ENCODE measurements at regions of chr1 and their contacts with region 1.

Region 1: DNA sequence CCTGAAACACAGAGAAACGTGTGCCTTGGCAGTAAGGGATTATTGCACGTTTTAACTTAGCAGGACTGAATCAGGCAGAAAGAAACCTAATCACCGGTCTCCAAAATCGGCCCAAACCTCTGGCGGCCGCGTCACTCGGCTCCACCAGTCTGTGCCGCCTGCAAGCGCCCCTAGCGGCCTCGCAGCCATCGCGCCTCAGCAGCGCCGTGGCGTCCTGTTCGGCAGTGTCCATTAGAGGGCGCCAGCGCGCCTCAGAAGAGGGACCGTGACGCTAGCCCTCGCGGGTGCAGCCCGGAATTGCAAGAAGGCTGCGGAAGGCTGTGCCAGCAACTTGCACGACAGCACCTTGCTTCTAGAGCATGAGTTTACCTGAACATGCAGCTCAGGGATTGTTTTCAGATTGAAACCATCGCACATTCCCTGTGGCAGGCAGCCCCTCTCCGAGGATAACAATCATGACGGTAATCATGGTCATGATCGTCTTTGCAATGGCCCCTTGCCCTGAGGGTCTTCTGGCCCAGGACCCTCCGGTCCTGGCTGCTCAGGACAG is 164.4 kb downstream of the TRIM33 start:
- DNase-seq: peak; percentile 98
- ATAC-seq: peak; percentile 98
- H3K4me3 Mint-ChIP-seq: peak overlapping the region; percentile 71
- H3K27ac Mint-ChIP-seq: peak overlapping the region; percentile 95
- H3K4me1 Mint-ChIP-seq: peaks cover 26% of the 10 kb centered on the region
- H3K27me3 Mint-ChIP-seq: no peaks in the 10 kb centered on the region

Region 2: DNA sequence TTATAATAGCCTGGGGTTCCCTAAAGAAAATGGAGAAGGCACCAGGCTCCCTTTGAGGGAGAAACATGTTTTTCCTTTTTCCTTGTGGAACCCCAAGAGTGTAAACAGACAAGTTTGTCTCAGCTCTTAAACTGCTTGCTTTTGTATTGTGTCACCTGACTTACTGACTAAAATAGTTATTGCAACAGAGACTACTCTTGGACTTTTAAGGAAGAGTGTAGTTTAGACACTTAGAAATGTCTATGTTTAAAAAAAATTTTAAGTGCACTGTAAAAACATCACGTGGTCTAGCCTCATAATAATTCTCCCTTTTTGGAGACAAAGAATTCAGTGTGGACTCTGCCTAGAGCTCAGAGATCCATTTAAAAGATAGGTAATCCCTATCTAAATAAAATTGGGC is 23.4 kb after region 1 on chr1:
- CTCF ChIA-PET with region 1: interaction called, 11 read pairs
- POLR2A ChIA-PET with region 1: no interaction called
- intact Hi-C with region 1: no loop called
- DNase-seq: no peak
- ATAC-seq: no peak
- H3K4me3 Mint-ChIP-seq: no peak overlapping the region
- H3K27ac Mint-ChIP-seq: no peak overlapping the region
- H3K4me1 Mint-ChIP-seq: no peaks in the 10 kb centered on the region
- H3K27me3 Mint-ChIP-seq: no peaks in the 10 kb centered on the region

Region 3: DNA sequence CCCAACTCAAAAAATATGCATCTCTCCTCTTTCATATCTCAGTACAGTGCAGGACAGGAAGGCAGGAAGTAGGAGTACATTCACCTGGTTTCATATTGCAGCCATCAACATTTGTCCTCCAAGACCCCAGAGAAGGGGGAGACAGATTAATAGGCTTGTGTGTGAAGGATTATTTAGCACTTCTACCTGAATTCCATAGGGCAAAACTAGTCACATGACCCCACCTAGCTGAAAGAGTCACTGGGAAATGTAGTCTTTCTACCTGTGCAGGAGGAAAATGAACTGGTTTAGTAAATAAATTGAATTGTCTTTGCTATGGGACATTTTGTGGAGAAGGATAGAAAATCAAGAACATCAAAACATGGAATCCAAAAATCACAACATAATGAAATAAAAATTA is 178.4 kb after region 1 on chr1:
- CTCF ChIA-PET with region 1: interaction called, 11 read pairs
- POLR2A ChIA-PET with region 1: no interaction called
- intact Hi-C with region 1: no loop called
- DNase-seq: no peak
- ATAC-seq: peak; percentile 60
- H3K4me3 Mint-ChIP-seq: no peak overlapping the region
- H3K27ac Mint-ChIP-seq: no peak overlapping the region
- H3K4me1 Mint-ChIP-seq: no peaks in the 10 kb centered on the region
- H3K27me3 Mint-ChIP-seq: peaks cover under 1% of the 10 kb centered on the region

Region 4: GRCh38 chr1:114581335-114582287 is 235.1 kb after region 1 on chr1 and contains the start of gene BCAS2:
- CTCF ChIA-PET with region 1: interaction called, 3 read pairs
- POLR2A ChIA-PET with region 1: no interaction called
- intact Hi-C with region 1: loop called (anchors 1 to 2 kb)
- DNase-seq: peak; percentile 97
- ATAC-seq: peak; percentile 99
- H3K4me3 Mint-ChIP-seq: peak within 1 kb of the TSS; percentile 97
- H3K27ac Mint-ChIP-seq: peak within 1 kb of the TSS; percentile 98
- H3K4me1 Mint-ChIP-seq: peaks cover 29% of the 10 kb centered on the region
- H3K27me3 Mint-ChIP-seq: peaks cover 1% of the 10 kb centered on the region
- total RNA-seq, gene BCAS2: 54.1 to 54.8 TPM

Region 5: GRCh38 chr1:114716304-114717170 is 370.0 kb after region 1 on chr1 and contains the start of gene NRAS:
- CTCF ChIA-PET with region 1: interaction called, 3 read pairs
- POLR2A ChIA-PET with region 1: no interaction called
- intact Hi-C with region 1: loop called (anchors 1 to 5 kb)
- DNase-seq: peak; percentile 97
- ATAC-seq: peak; percentile 91
- H3K4me3 Mint-ChIP-seq: peak within 1 kb of the TSS; percentile 95
- H3K27ac Mint-ChIP-seq: peak within 1 kb of the TSS; percentile 97
- H3K4me1 Mint-ChIP-seq: peaks cover 30% of the 10 kb centered on the region
- H3K27me3 Mint-ChIP-seq: no peaks in the 10 kb centered on the region
- total RNA-seq, gene NRAS: 53.0 to 55.0 TPM

Region 6: GRCh38 chr1:115012006-115012405 is 665.5 kb after region 1 on chr1:
- CTCF ChIA-PET with region 1: no interaction called
- POLR2A ChIA-PET with region 1: no interaction called
- intact Hi-C with region 1: no loop called
- DNase-seq: no peak
- ATAC-seq: no peak
- H3K4me3 Mint-ChIP-seq: no peak overlapping the region
- H3K27ac Mint-ChIP-seq: no peak overlapping the region
- H3K4me1 Mint-ChIP-seq: no peaks in the 10 kb centered on the region
- H3K27me3 Mint-ChIP-seq: no peaks in the 10 kb centered on the region

Region 7: GRCh38 chr1:115052454-115053083 is 706.0 kb after region 1 on chr1:
- CTCF ChIA-PET with region 1: interaction called, 3 read pairs
- POLR2A ChIA-PET with region 1: no interaction called
- intact Hi-C with region 1: loop called in 1 of 2 experiments (anchors 1 kb)
- DNase-seq: peak; percentile 70
- ATAC-seq: peak; percentile 80
- H3K4me3 Mint-ChIP-seq: no peak overlapping the region
- H3K27ac Mint-ChIP-seq: no peak overlapping the region
- H3K4me1 Mint-ChIP-seq: peaks cover 3% of the 10 kb centered on the region
- H3K27me3 Mint-ChIP-seq: no peaks in the 10 kb centered on the region